Endothelial cell of umbilical vein (primary cell): ENCODE measurements at regions of chr13 and their contacts with region 1.

Region 1: GRCh38 chr13:64912141-64912540 is 2318.0 kb downstream of the PCDH9 start:
- DNase-seq: peak; percentile 67
- H3K4me3 ChIP-seq: no peak overlapping the region
- H3K27ac ChIP-seq: peak overlapping the region; percentile 66
- H3K4me1 ChIP-seq: peaks cover 19% of the 10 kb centered on the region
- H3K27me3 ChIP-seq: no peaks in the 10 kb centered on the region
- CTCF ChIP-seq: no peak
- POLR2A ChIP-seq: no peak

Region 2: GRCh38 chr13:64928696-64929499 is 16.8 kb after region 1 on chr13:
- CTCF ChIA-PET with region 1: interaction called, 3 read pairs
- POLR2A ChIA-PET with region 1: no interaction called
- dilution Hi-C with region 1: no loop called
- intact Hi-C with region 1: loop called (anchors 2 kb)
- DNase-seq: peak; percentile 77
- H3K4me3 ChIP-seq: no peak overlapping the region
- H3K27ac ChIP-seq: peak overlapping the region; percentile 43
- H3K4me1 ChIP-seq: peaks cover 9% of the 10 kb centered on the region
- H3K27me3 ChIP-seq: no peaks in the 10 kb centered on the region
- CTCF ChIP-seq: no peak
- POLR2A ChIP-seq: no peak